Activated CD4-positive, alpha-beta T cell treated with anti-CD3 and anti-CD28 coated beads for 36 hours (primary cell): ENCODE measurements at regions of chr6 and their contacts with region 1.

Region 1: DNA sequence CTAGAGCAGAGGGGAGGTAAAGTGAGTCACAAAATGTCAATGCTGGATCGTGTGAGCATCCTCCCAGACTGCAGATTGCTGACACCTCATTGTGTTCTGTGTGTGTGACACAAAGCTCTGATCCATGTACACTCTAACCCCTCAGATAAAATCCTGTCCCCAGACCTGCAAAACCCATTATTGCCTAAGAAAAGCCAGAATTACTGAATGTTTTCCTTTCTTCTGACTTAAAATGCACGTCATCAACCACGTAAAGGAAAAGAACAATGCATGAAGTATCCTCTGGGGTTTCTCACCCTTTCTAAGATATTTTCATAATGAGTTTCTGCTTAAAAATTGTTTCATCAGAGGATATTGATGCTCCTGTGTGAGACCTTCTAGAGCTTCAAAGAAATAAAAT is 218.0 kb upstream of the PREP start:
- DNase-seq: peak; percentile 31
- ATAC-seq: peak; percentile 99
- H3K4me3 Mint-ChIP-seq: no peak overlapping the region
- H3K27ac Mint-ChIP-seq: peak overlapping the region; percentile 2
- H3K4me1 Mint-ChIP-seq: peaks cover 6% of the 10 kb centered on the region
- H3K27me3 Mint-ChIP-seq: peaks cover 16% of the 10 kb centered on the region

Region 2: DNA sequence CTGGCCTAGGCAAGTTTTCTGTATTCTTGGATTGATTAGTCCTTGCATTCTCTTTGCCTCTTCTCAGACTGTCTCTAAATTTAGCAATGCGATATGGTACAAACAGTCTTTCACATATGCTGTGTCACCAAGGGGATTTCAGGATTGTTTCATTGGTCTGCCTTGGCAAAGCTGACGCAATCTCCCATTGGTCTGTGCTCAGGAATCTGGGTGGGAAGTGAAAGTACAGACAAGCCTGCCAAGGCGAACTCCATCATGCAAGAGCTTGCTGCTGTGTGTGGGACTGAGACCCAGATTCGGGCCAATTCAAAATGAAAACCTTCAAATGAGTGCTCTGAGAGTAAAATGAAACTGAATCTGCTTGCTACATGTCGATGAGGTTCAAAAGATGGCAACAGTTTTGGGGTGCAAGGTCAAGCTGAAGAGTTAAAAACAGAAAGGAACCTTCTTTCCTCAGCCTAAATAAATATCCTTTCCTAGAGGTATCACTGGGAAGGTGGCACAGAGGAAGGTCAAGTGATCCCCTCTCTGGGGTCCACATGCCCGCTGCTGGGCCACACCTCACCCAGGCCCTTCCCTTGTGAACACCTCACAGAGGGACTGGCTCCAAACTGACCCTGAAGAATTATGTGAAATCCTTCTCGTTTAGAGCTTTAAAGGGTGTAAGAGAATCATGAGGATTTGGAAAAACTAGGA is 19.2 kb before region 1 on chr6:
- CTCF ChIA-PET with region 1: interaction called, 3 read pairs
- POLR2A ChIA-PET with region 1: no interaction called
- intact Hi-C with region 1: loop called in 1 of 2 experiments (anchors 2 kb)
- DNase-seq: peak; percentile 73
- ATAC-seq: peak; percentile 90
- H3K4me3 Mint-ChIP-seq: no peak overlapping the region
- H3K27ac Mint-ChIP-seq: peak overlapping the region; percentile 79
- H3K4me1 Mint-ChIP-seq: peaks cover 15% of the 10 kb centered on the region
- H3K27me3 Mint-ChIP-seq: peaks cover 8% of the 10 kb centered on the region